Activated naive CD4-positive, alpha-beta T cell treated with anti-CD3 and anti-CD28 coated beads for 36 hours (primary cell): ENCODE measurements at regions of chr1 and their contacts with region 1.

Region 1: DNA sequence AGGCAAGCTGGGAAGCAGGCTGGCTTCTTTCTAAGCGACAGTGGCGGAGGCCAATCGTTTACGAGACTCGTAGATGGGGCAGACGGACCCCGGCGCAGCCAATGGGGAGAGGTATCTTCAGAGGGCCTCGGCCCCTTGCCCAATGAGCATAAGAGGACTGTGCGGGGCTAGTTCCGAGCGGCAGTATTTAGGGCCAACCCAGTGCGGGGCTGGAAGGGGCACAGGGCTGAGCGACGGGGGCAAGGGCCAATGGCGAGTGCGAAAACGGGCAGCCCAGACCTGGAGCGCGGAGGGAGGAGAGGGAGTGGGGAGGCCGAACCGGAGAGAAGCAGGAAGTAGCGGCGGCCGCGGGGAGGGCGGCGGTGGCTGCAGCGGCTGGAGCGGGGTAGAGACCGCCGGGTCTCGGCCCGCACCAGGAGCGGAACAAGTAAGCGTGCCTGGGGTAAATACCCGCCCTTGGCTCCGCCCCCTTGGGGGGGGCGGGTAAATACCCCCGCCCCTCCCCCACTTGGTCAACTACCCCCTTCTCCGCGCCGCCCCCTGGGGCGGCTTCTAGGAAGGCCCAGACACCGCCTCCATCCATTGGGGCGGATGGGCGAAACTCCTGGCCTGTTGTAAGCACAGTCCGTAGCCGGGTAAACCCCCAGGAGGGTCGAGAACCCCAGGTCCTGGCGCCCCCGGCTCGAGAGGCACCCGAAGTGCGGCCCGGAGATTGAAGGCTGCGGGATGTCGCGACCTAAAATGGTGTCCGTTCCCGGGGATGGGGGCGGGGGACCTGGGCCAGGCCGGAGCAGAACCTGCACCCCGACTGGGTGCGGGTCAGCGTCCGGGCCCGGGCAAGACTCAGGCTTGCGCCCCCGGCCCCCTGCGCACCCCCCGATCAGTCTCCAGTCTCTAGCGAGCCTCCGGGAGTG is at the start of gene ZNF687:
- DNase-seq: peak; percentile 100
- H3K4me3 Mint-ChIP-seq: peak within 1 kb of the TSS; percentile 98
- H3K27ac Mint-ChIP-seq: peak within 1 kb of the TSS; percentile 99
- H3K4me1 Mint-ChIP-seq: peaks cover 35% of the 10 kb centered on the region
- H3K27me3 Mint-ChIP-seq: no peaks in the 10 kb centered on the region
- total RNA-seq, gene ZNF687: 20.9 to 22.0 TPM

Region 2: GRCh38 chr1:151070474-151071276 is 211.6 kb before region 1 on chr1 and contains the start of gene GABPB2:
- CTCF ChIA-PET with region 1: interaction called, 4 read pairs
- intact Hi-C with region 1: loop called (anchors 1 kb)
- DNase-seq: peak; percentile 92
- H3K4me3 Mint-ChIP-seq: peak within 1 kb of the TSS; percentile 99
- H3K27ac Mint-ChIP-seq: peak within 1 kb of the TSS; percentile 100
- H3K4me1 Mint-ChIP-seq: peaks cover 26% of the 10 kb centered on the region
- H3K27me3 Mint-ChIP-seq: no peaks in the 10 kb centered on the region
- total RNA-seq, gene GABPB2: 16.1 to 16.2 TPM

Region 3: GRCh38 chr1:151124763-151125403 is 157.3 kb before region 1 on chr1:
- CTCF ChIA-PET with region 1: no interaction called
- intact Hi-C with region 1: no loop called
- DNase-seq: no peak
- H3K4me3 Mint-ChIP-seq: no peak overlapping the region
- H3K27ac Mint-ChIP-seq: no peak overlapping the region
- H3K4me1 Mint-ChIP-seq: no peaks in the 10 kb centered on the region
- H3K27me3 Mint-ChIP-seq: no peaks in the 10 kb centered on the region

Region 4: DNA sequence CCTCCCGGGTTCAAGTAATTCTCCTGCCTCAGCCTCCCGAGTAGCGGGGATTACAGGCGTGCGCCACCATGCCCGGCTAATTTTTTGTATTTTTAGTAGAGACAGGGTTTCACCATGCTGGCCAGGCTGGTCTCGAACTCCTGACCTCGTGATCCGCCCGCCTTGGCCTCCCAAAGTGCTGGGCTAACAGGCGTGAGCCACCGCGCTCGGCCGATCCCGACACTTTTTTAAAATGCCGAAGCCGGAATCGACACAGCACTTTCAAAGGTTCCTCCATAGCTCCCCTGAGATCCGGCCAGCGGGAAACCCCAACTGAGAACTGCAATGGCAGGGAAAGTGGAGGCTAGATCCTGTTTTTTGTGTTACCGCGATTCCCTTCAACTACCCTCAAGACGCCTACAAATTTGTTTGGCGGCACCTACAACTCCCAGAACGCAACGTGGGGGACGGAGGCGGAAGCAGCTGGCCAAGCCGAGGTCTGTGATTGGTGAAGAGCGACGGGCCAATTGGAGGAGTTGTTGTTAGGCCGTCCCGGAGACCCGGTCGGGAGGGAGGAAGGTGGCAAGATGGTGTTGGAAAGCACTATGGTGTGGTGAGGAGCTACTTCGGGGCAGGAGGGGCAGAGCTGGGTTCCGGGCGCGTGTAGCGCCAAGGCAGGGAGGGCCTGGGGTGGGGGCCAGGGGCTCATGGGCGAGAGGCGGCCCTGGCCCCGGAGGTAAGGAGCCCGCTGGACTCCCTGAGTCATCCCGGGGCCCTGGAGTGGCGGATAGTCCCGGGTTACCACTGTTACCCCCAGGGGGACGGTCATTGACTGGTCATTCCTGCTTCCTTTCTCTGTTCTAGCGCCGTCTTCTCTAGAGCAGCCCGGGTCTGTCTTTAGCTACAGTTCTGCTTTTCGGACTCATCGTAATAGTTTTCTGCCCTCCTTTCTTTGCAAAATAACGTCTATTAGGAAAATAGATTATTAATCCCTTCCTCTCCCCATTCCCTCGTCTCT is 27.7 kb before region 1 on chr1 and contains the start of gene PSMD4:
- CTCF ChIA-PET with region 1: interaction called, 8 read pairs
- intact Hi-C with region 1: loop called (anchors 1 kb)
- DNase-seq: peak; percentile 97
- H3K4me3 Mint-ChIP-seq: peak within 1 kb of the TSS; percentile 95
- H3K27ac Mint-ChIP-seq: peak within 1 kb of the TSS; percentile 92
- H3K4me1 Mint-ChIP-seq: peaks cover 31% of the 10 kb centered on the region
- H3K27me3 Mint-ChIP-seq: peaks cover 2% of the 10 kb centered on the region
- total RNA-seq, gene PSMD4: 167 to 192 TPM

Region 5: DNA sequence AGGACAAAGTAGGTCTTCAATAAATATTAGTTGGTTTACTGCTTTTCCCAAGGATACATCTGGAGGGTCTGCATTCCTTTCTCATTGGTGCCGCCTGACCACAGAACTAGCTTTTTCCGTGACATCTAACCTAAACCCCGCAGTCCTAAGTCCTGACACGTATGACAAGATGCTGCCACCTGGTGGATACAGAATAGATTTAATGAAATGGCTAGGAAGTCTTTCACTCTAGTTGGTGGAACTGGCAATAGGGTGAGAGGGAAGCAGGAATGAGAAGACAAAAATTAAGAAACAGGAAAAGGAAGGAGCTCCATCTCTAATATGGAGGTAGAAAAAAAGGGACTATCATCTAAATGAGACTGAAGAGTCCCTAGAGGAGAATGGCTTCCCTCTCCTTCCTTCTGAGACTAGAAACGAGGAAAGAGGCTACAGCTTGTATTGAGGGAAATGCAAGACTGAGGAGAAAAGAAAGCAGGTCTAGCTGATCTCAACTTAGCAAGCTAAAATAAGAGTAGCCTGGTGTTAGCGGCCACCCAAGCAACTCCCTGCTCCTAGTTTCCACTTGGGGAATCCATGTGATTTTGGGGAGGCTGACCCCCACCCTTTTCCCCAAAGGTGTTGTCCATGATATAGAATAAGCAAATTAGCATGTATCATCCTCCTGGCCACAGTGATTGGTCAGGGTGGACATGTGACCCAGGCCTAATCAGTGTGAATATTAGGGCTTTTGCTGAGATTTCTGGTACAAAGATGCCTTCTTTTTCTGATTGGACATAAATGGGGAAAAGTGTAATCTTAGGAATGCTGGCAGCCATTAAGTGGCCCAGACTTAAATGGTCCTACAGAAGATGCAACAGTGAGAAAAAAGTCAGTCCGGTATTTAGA is 58.9 kb after region 1 on chr1:
- CTCF ChIA-PET with region 1: interaction called, 20 read pairs
- intact Hi-C with region 1: loop called (anchors 1 kb)
- DNase-seq: peak; percentile 69
- H3K4me3 Mint-ChIP-seq: no peak overlapping the region
- H3K27ac Mint-ChIP-seq: peak overlapping the region; percentile 23
- H3K4me1 Mint-ChIP-seq: peaks cover 26% of the 10 kb centered on the region
- H3K27me3 Mint-ChIP-seq: no peaks in the 10 kb centered on the region

Region 6: GRCh38 chr1:151459331-151460046 is 177.3 kb after region 1 on chr1 and contains the start of gene POGZ:
- CTCF ChIA-PET with region 1: no interaction called
- intact Hi-C with region 1: loop called (anchors 1 kb)
- DNase-seq: peak; percentile 97
- H3K4me3 Mint-ChIP-seq: peak within 1 kb of the TSS; percentile 78
- H3K27ac Mint-ChIP-seq: peak within 1 kb of the TSS; percentile 86
- H3K4me1 Mint-ChIP-seq: peaks cover 29% of the 10 kb centered on the region
- H3K27me3 Mint-ChIP-seq: peaks cover 11% of the 10 kb centered on the region
- total RNA-seq, gene POGZ: 69.7 to 73.7 TPM

Region 7: GRCh38 chr1:151790071-151790940 is 508.1 kb after region 1 on chr1 and contains the start of gene TDRKH:
- CTCF ChIA-PET with region 1: no interaction called
- intact Hi-C with region 1: loop called (anchors 2 kb)
- DNase-seq: peak; percentile 99
- H3K4me3 Mint-ChIP-seq: peak within 1 kb of the TSS; percentile 98
- H3K27ac Mint-ChIP-seq: peak within 1 kb of the TSS; percentile 81
- H3K4me1 Mint-ChIP-seq: peaks cover 22% of the 10 kb centered on the region
- H3K27me3 Mint-ChIP-seq: no peaks in the 10 kb centered on the region
- total RNA-seq, gene TDRKH: 22.0 to 22.5 TPM